ENCODE measurements at regions of chr14 and their contacts with region 1.

Region 1: GRCh38 chr14:63852817-63853731 is at the start of gene SYNE2:
- DNase-seq: peak; percentile 38
- ATAC-seq: peak; percentile 96
- H3K4me3 ChIP-seq: peak within 1 kb of the TSS; percentile 76 to 92 (median 82)
- H3K27ac ChIP-seq: peak within 1 kb of the TSS; percentile 50
- H3K4me1 ChIP-seq: peaks cover 24% of the 10 kb centered on the region
- H3K27me3 ChIP-seq: no peaks in the 10 kb centered on the region; a peak in 1 of 5 replicates
- CTCF ChIP-seq: peak; percentile 30
- EP300 ChIP-seq: no peak
- POLR2A ChIP-seq: peak; percentile 19 to 49; a peak in 3 of 4 replicates
- RAD21 ChIP-seq: no peak
- total RNA-seq, gene SYNE2: 13.3 and 19.5 TPM in 2 replicates

Region 2: GRCh38 chr14:63875311-63875710 is 22.2 kb after region 1 on chr14:
- CTCF ChIA-PET with region 1: no interaction called
- POLR2A ChIA-PET with region 1: no interaction called
- in situ Hi-C with region 1: no loop called
- intact Hi-C with region 1: no loop called
- DNase-seq: no peak
- ATAC-seq: no peak
- H3K4me3 ChIP-seq: no peak overlapping the region
- H3K27ac ChIP-seq: no peak overlapping the region
- H3K4me1 ChIP-seq: no peaks in the 10 kb centered on the region
- H3K27me3 ChIP-seq: no peaks in the 10 kb centered on the region
- CTCF ChIP-seq: no peak
- EP300 ChIP-seq: no peak
- POLR2A ChIP-seq: no peak
- RAD21 ChIP-seq: no peak

Region 3: GRCh38 chr14:63896278-63896720 is 43.2 kb after region 1 on chr14:
- CTCF ChIA-PET with region 1: no interaction called
- POLR2A ChIA-PET with region 1: no interaction called
- in situ Hi-C with region 1: no loop called
- intact Hi-C with region 1: loop called (anchors 5 kb)
- DNase-seq: peak; percentile 81
- ATAC-seq: peak; percentile 87
- H3K4me3 ChIP-seq: peak overlapping the region in 1 of 3 experiments; percentile 2; a peak in 1 of 6 replicates
- H3K27ac ChIP-seq: no peak overlapping the region
- H3K4me1 ChIP-seq: peaks cover 31% of the 10 kb centered on the region
- H3K27me3 ChIP-seq: no peaks in the 10 kb centered on the region
- CTCF ChIP-seq: no peak
- EP300 ChIP-seq: no peak
- POLR2A ChIP-seq: no peak
- RAD21 ChIP-seq: no peak

Region 4: DNA sequence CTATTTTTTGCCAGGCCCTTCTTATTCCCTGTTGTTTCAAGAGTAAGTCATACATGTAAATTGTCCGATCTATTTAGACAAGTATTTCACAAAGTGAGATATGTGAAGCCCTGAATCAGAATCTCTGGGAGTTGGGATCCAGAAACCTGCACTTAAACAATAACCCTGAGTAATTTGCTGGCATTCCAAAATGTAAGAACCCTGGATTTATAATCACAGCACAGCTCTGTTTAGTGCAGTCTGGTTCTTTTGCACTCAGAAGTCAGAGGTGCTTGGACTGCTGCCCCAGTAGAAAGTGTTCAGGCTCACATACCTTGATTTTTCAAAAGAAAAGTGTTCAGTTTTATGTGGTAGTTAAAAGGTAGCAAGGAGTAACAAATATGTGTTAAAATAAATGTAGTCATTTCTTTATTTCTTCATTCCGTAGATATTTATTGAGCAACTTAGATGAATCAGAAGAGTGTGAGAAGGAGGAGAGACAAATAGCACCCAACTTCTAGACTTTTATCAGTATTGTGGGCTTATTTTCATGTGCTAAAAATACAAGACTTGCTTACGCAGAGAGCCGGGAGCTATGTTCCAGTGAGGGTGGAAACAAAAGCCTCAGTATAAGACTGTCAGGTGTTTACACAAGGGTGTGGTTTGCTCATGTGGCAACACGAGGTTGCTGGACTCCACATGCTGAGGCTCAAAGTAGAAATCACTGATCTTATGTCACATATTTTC is 69.8 kb after region 1 on chr14:
- CTCF ChIA-PET with region 1: no interaction called
- POLR2A ChIA-PET with region 1: no interaction called
- in situ Hi-C with region 1: no loop called
- intact Hi-C with region 1: loop called (anchors 2 kb)
- DNase-seq: peak; percentile 88
- ATAC-seq: peak; percentile 98
- H3K4me3 ChIP-seq: peak overlapping the region in 1 of 3 experiments; percentile 13; a peak in 1 of 6 replicates
- H3K27ac ChIP-seq: peak overlapping the region; percentile 47
- H3K4me1 ChIP-seq: peaks cover 20% of the 10 kb centered on the region
- H3K27me3 ChIP-seq: no peaks in the 10 kb centered on the region
- CTCF ChIP-seq: no peak
- EP300 ChIP-seq: peak in 1 of 2 experiments; percentile 41; a peak in 1 of 4 replicates
- POLR2A ChIP-seq: no peak
- RAD21 ChIP-seq: no peak

Region 5: DNA sequence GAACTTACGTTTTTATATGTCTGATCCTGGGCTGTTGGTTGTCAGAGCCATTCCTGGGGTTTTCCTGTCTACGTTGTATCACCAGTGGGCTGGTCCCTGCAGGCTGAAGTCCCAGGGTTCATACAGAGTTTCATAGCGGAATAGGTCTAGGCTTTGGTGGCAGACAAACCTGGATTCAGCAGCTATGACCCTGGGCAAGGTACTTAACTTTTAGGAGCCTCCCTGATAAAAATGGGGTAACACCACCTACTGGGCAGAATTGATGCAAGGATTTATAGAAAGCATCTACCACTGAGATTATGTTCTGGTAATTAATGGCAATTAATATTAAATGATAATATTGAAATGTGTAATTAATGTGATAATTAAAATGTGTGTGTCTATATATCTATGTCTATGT is 140.9 kb after region 1 on chr14:
- CTCF ChIA-PET with region 1: no interaction called
- POLR2A ChIA-PET with region 1: no interaction called
- in situ Hi-C with region 1: no loop called
- intact Hi-C with region 1: loop called (anchors 10 kb)
- DNase-seq: no peak
- ATAC-seq: no peak
- H3K4me3 ChIP-seq: no peak overlapping the region
- H3K27ac ChIP-seq: no peak overlapping the region
- H3K4me1 ChIP-seq: no peaks in the 10 kb centered on the region
- H3K27me3 ChIP-seq: no peaks in the 10 kb centered on the region
- CTCF ChIP-seq: no peak
- EP300 ChIP-seq: no peak
- POLR2A ChIP-seq: no peak
- RAD21 ChIP-seq: no peak

Measured in HepG2 (cell line).